ENCODE measurements at regions of chr3 and their contacts with region 1.

Region 1: GRCh38 chr3:182869059-182869458 is 75.8 kb downstream of the ATP11B start:
- DNase-seq: no peak
- ATAC-seq: no peak
- H3K4me3 ChIP-seq: no peak overlapping the region
- H3K4me3 Mint-ChIP-seq: no peak overlapping the region
- H3K27ac ChIP-seq: no peak overlapping the region
- H3K27ac Mint-ChIP-seq: no peak overlapping the region
- H3K4me1 ChIP-seq: no peaks in the 10 kb centered on the region
- H3K4me1 Mint-ChIP-seq: peaks cover 0 to 5% (median 0%) of the 10 kb centered on the region in 7 donors
- H3K27me3 ChIP-seq: no peaks in the 10 kb centered on the region
- H3K27me3 Mint-ChIP-seq: no peaks in the 10 kb centered on the region

Region 2: DNA sequence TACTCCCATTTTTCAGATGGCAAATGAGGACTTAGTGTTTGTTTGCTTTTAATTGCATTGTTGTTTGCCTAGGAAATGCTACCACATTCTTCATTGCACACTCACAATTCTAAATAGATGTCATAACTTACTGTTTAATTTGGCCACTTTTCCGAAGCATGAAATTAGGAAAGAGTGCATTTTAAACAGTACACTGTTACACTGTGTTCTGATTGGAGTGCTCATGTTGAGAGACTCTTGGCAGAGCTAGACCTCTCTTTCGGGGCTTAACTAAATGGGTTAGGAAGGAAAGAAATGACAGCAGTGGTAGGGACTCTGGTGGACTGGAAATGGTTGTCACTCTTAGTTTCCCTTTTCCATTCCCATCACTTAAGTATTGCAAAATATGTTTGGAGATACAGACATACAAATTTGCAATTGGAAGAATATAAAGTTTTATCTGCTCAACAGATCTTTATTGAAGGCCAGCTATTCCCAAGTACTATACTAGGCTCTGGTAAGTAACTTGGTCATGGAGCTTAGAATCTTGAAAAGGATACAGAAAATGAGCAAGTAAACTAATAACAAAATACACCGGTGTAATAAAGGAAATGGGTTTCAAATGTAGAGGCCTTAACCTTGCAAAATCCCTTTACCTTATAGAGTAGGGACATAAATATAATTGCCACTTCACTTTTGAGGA is 21.0 kb after region 1 on chr3:
- CTCF ChIA-PET with region 1: no interaction called
- POLR2A ChIA-PET with region 1: no interaction called
- intact Hi-C with region 1: loop called in 1 of 2 experiments (anchors 2 kb)
- DNase-seq: no peak
- ATAC-seq: no peak
- H3K4me3 ChIP-seq: no peak overlapping the region
- H3K4me3 Mint-ChIP-seq: no peak overlapping the region
- H3K27ac ChIP-seq: no peak overlapping the region
- H3K27ac Mint-ChIP-seq: no peak overlapping the region
- H3K4me1 ChIP-seq: no peaks in the 10 kb centered on the region
- H3K4me1 Mint-ChIP-seq: peaks cover 0 to 5% (median 0%) of the 10 kb centered on the region in 7 donors
- H3K27me3 ChIP-seq: no peaks in the 10 kb centered on the region
- H3K27me3 Mint-ChIP-seq: no peaks in the 10 kb centered on the region

Region 3: DNA sequence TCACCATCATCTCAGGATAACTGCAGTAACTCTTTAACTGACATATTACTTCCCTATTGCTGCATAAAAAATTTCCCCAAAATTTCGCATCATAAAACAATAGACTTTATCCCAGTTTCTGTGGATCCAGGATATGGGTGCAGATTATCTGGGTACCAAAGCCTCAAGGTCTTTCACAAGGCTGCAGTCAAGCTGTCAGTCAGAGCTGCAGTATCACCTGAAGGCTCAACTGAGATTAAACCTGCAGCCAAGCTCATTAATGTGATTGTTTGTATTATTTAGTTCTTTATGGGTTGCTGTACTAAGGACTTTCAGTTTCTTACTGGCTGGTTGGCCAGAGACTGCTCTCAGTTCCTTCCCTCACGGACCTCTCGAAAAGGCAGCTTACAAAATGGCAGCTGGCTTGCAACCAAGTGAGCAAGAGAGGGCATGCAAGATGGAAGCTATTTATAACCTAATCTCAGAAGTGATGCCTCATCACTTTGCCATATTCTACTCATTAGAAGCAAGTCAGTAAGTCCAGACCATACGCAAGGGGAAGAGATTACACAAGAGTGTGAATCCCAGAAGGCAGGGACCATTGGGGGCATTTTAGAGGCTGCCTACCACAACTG is 56.4 kb after region 1 on chr3:
- CTCF ChIA-PET with region 1: no interaction called
- POLR2A ChIA-PET with region 1: no interaction called
- intact Hi-C with region 1: no loop called
- DNase-seq: no peak
- ATAC-seq: peak; percentile 12
- H3K4me3 ChIP-seq: no peak overlapping the region
- H3K4me3 Mint-ChIP-seq: no peak overlapping the region
- H3K27ac ChIP-seq: no peak overlapping the region
- H3K27ac Mint-ChIP-seq: peak overlapping the region in 2 of 9 donors; percentile 12 to 47
- H3K4me1 ChIP-seq: no peaks in the 10 kb centered on the region
- H3K4me1 Mint-ChIP-seq: peaks cover 0 to 10% (median 0%) of the 10 kb centered on the region in 7 donors
- H3K27me3 ChIP-seq: no peaks in the 10 kb centered on the region
- H3K27me3 Mint-ChIP-seq: no peaks in the 10 kb centered on the region